Activated T-helper 1 cell treated with anti-CD3 and anti-CD28 coated beads, Interleukin-12 subunit alpha, Interleukin-12 subunit beta, Interleukin-2, Interleukin-4 antibody, amounts not matched to agents 30 ng/mL and 10 ng/mL and 1 ng/mL, durations not matched to agents 14 hours and 24 hours and 36 hours (primary cell): ENCODE measurements at regions of chr3 and their contacts with region 1.

Region 1: GRCh38 chr3:11803977-11804892 is 42.5 kb downstream of the TAMM41 start:
- DNase-seq: peak; percentile 16
- H3K4me3 Mint-ChIP-seq: no peak overlapping the region
- H3K27ac Mint-ChIP-seq: no peak overlapping the region
- H3K4me1 Mint-ChIP-seq: peaks cover 10% of the 10 kb centered on the region
- H3K27me3 Mint-ChIP-seq: no peaks in the 10 kb centered on the region

Region 2: GRCh38 chr3:11379233-11379823 is 424.9 kb before region 1 on chr3:
- intact Hi-C with region 1: loop called (anchors 2 kb)
- DNase-seq: no peak
- H3K4me3 Mint-ChIP-seq: no peak overlapping the region
- H3K27ac Mint-ChIP-seq: no peak overlapping the region
- H3K4me1 Mint-ChIP-seq: no peaks in the 10 kb centered on the region
- H3K27me3 Mint-ChIP-seq: no peaks in the 10 kb centered on the region

Region 3: GRCh38 chr3:11770477-11771391 is 33.5 kb before region 1 on chr3:
- intact Hi-C with region 1: loop called (anchors 2 kb)
- DNase-seq: peak; percentile 82
- H3K4me3 Mint-ChIP-seq: peak overlapping the region; percentile 21
- H3K27ac Mint-ChIP-seq: peak overlapping the region; percentile 82
- H3K4me1 Mint-ChIP-seq: peaks cover 20% of the 10 kb centered on the region
- H3K27me3 Mint-ChIP-seq: no peaks in the 10 kb centered on the region

Region 4: DNA sequence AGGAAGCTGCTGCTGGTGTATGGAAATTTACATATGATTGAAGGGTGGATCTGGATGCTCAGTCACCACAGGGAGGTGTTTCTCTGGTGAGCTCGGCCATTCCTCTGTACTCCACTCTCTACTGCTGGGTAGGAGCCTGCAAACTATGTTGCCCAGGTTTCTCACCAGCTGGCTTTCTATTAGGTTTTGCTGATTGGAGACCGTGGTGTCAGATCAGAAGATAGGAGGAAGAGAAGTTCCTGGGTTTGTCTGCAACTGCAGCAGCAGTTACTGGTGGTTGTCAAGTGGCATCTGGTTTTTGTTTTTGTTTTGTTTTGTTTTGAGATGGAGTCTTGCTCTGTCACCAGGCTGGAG is 19.2 kb before region 1 on chr3:
- intact Hi-C with region 1: loop called (anchors 2 kb)
- DNase-seq: peak; percentile 36
- H3K4me3 Mint-ChIP-seq: peak overlapping the region; percentile 72
- H3K27ac Mint-ChIP-seq: peak overlapping the region; percentile 96
- H3K4me1 Mint-ChIP-seq: peaks cover 21% of the 10 kb centered on the region
- H3K27me3 Mint-ChIP-seq: no peaks in the 10 kb centered on the region